Left lung (tissue), 14 donors: ENCODE measurements at regions of chr11 and their contacts with region 1.

Region 1: DNA sequence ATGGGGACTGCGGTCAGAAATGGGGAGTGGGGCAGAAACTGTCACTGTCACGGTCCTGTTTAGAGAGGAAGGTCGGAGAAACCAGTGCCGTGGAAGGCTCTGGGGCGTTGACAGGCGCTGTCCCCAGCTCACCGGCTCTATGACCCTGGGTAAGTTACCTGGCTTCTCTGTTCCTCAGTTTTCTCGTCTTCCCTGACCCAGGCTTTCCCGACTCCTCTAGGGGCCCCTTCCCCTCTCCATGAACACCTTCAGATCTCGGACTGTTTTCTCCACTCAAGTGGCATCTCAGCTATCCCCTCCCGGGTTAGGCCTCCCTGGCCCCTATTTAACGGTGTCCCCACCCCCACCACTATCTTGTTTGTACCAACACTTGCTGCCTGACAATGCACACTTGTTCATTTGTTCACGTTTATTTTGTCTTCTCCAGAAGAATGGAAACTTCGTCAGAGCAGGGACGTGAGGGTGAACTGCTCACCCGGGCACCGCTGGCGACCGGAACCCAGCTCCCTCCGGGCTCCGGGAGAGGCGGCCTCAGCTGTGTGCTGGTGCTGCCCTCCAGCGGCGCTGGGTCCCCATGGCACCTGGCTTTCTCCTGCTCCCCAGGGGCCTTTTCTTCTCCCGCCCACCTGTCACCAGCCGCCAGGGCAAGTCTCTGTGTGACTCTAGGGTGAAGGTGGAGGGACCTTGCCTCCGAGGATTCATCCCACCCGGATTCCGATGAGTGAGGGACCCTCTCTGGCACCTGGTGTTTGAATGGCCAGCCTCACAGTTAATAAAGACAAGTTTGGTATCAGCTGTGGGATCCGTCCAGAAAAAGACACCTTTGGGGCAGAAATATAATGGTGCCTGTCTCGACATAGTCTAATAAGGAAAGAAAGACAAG is 33.1 kb upstream of the SLC35C1 start:
- DNase-seq: peak; percentile 72 to 97 (median 82)
- ATAC-seq: peak; percentile 100
- H3K4me3 ChIP-seq: peak overlapping the region; percentile 52 to 60
- H3K27ac ChIP-seq: peak overlapping the region; percentile 53 to 70
- H3K4me1 ChIP-seq: peaks cover 0 to 9% of the 10 kb centered on the region in 2 donors
- H3K27me3 ChIP-seq: peaks cover 0 to 4% of the 10 kb centered on the region in 2 donors
- CTCF ChIP-seq: peak; percentile 91

Region 2: DNA sequence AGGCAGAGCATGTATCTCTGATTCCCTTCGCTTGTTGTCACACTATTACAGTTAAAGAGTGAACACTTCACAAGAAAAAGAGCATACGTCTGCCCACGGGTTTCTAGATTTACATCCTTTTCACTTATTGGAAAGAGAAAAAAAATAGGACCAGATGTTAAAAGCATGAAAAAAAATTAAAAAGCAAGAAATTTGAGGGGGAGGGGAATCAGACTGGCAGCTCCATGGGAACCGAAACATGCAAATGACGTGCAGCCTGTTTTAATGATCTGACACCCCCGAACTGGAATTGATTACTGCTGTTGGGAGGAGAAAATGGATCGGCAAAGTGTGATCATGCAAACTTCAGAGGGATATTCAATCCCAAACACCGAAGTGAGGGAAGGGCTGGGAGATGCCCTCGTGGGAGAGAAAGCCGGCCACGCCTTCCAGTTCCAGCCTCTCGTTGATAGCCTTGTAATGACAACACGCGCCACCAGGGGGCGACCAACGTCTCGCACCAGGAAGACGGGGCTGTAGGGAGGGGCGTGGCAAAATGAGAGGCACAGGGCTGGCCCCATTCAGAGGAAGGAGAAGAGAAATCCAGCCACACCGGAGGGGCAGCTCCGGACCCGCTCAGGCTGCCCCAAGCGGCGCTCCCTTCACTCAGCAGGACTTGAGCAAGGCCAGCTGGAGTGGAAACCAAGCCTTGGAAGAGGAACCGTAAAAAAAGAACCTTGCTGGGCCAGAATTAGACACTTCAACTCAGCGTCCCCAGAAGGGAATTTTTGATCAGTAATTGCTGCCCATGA is 431.9 kb before region 1 on chr11:
- intact Hi-C with region 1: loop called in 1 of 2 experiments (anchors 10 kb)
- DNase-seq: peak; percentile 86 to 98 (median 94)
- ATAC-seq: peak; percentile 99
- H3K4me3 ChIP-seq: peak overlapping the region in 1 of 2 donors; percentile 6
- H3K27ac ChIP-seq: no peak overlapping the region
- H3K4me1 ChIP-seq: peaks cover 0 to 8% of the 10 kb centered on the region in 2 donors
- H3K27me3 ChIP-seq: peaks cover 0 to 2% of the 10 kb centered on the region in 2 donors
- CTCF ChIP-seq: peak; percentile 95 to 97

Region 3: GRCh38 chr11:45371251-45372115 is 400.3 kb before region 1 on chr11:
- intact Hi-C with region 1: loop called in 1 of 2 experiments (anchors 5 kb)
- DNase-seq: peak; percentile 46 to 85 (median 70)
- ATAC-seq: peak; percentile 95
- H3K4me3 ChIP-seq: no peak overlapping the region
- H3K27ac ChIP-seq: no peak overlapping the region
- H3K4me1 ChIP-seq: peaks cover 3 to 4% of the 10 kb centered on the region in 2 donors
- H3K27me3 ChIP-seq: peaks cover 0 to 41% of the 10 kb centered on the region in 2 donors
- CTCF ChIP-seq: peak; percentile 83 to 88

Region 4: GRCh38 chr11:45405916-45406670 is 365.7 kb before region 1 on chr11:
- intact Hi-C with region 1: loop called in 1 of 2 experiments (anchors 10 kb)
- DNase-seq: peak in 1 of 4 donors; percentile 21
- ATAC-seq: no peak
- H3K4me3 ChIP-seq: no peak overlapping the region
- H3K27ac ChIP-seq: no peak overlapping the region
- H3K4me1 ChIP-seq: no peaks in the 10 kb centered on the region
- H3K27me3 ChIP-seq: peaks cover 0 to 28% of the 10 kb centered on the region in 2 donors
- CTCF ChIP-seq: peak in 1 of 2 donors; percentile 19

Region 5: DNA sequence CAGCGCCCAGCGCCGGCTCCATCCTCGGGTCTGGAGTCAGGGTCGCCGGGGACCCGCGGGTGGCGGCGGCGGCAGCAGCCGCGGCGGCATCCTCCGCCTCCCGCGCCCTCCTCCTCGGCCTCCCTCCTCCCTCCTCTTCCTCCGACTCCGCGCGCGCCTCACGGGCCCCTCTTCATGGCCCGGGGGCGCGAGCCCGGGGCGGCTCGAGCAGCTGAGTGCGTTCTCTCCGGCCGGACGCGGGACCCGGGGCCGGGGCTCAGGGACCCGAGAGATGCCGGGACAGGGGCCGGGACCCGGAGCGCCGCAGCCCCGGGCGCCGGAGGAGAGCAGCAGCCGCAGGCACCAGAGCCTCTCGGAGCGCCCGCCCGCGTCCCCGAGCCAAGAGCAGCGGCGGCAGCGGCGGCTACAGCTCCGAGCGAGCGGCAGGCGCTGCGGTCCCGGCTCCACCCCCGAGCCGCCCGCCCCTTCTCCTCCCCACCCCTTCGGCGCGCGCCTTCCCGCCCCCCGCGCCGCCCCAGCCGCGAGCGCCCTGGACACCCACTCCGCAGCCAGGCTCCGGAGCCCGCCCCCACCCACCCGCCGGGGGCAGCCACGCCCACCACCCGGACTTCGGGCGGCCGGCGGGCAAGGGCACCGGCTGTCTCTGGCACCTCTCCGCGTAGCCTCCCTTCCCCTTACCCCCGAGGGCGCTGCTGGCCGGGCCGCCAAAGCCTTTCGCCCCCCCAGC is 106.4 kb before region 1 on chr11 and contains the start of gene CHST1:
- intact Hi-C with region 1: loop called in 1 of 2 experiments (anchors 10 kb)
- DNase-seq: peak in 2 of 4 donors; percentile 36 to 83
- ATAC-seq: peak; percentile 76
- H3K4me3 ChIP-seq: peak within 1 kb of the TSS; percentile 44 to 46
- H3K27ac ChIP-seq: peak within 1 kb of the TSS in 1 of 2 donors; percentile 50
- H3K4me1 ChIP-seq: peaks cover 11 to 18% of the 10 kb centered on the region in 2 donors
- H3K27me3 ChIP-seq: peaks cover 16 to 81% of the 10 kb centered on the region in 2 donors
- CTCF ChIP-seq: no peak
- polyA plus RNA-seq, gene CHST1: 5.2 to 10.2 (median 6.0) TPM